GM23248 (cell line): ENCODE measurements at regions of chr4 and their contacts with region 1.

Region 1: DNA sequence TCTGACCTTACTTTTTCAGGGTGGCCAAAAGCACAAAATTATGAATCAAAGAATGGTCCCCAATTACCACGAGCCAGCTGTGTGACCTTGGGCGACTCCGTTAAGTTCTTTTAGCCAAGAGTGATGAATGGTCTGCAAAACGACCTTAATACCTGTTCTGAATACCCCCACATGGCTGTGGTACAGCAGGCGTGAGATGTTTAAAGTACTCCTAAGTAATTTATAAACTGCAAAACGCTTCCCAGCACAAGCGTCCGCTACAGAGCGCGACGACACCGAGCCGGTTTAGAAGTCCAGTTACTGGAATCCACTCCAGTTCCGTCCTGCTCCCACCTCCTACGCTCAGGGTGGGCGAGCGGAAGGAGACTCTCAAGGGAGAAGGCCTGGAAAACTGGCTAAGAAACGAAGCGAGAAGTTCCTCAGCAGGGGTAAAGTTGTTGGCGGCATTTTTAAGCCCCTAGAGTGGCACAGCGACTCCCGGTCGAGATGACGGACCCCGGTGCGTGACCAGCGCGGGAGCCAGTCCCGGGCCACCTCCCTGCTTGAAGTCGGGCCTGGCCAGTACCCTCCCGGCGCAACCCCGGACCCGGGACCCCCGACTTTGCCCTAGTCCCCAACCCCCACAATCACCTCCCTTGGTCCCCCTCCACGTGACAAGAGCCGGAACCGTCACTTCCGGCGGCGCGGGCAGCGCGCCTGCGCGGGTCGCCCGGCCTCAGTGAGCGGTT is 683 bp upstream of the BMP2K start:
- DNase-seq: peak; percentile 88
- H3K4me3 ChIP-seq: peak overlapping the region; percentile 84
- H3K27ac ChIP-seq: peak overlapping the region; percentile 91
- H3K4me1 ChIP-seq: peaks cover 34% of the 10 kb centered on the region
- H3K27me3 ChIP-seq: no peaks in the 10 kb centered on the region

Region 2: DNA sequence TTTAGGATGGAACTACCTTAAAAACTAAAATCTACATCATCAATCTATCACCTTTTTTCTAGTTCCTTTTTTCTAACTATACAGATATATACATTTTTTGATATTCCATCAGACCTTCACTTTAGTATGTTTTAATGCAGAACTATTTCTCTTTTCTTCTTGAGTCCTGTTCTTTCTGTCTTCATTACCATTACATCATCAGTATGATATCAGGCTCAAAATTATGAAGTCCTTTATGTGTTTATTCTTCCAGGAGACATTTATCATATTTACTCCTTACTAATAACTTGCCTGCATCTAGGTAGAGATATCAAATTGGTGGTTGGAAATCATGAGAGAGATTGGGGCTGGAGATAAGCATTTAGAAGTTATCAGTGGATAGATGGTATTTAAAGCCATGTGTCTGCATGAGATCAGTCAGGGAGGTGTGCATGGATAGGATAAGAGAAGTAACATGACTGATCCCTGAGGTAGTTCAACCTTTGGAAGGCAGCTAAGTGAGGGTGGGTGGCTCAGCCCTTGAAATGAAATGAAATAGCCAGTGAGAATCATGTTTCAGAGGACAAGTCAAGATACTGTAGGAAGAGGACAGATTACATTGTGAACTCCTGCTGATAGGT is 869.7 kb before region 1 on chr4:
- in situ Hi-C with region 1: no loop called
- DNase-seq: no peak
- H3K4me3 ChIP-seq: no peak overlapping the region
- H3K27ac ChIP-seq: no peak overlapping the region
- H3K4me1 ChIP-seq: peaks cover 1% of the 10 kb centered on the region; the same call in 1 of the 2 replicates
- H3K27me3 ChIP-seq: no peaks in the 10 kb centered on the region

Region 3: GRCh38 chr4:78638337-78639172 is 136.9 kb before region 1 on chr4:
- in situ Hi-C with region 1: no loop called
- DNase-seq: no peak
- H3K4me3 ChIP-seq: no peak overlapping the region
- H3K27ac ChIP-seq: no peak overlapping the region
- H3K4me1 ChIP-seq: peaks cover 10% of the 10 kb centered on the region
- H3K27me3 ChIP-seq: no peaks in the 10 kb centered on the region

Region 4: GRCh38 chr4:78656968-78657445 is 118.5 kb before region 1 on chr4:
- in situ Hi-C with region 1: loop called (anchors 10 kb)
- DNase-seq: no peak
- H3K4me3 ChIP-seq: no peak overlapping the region
- H3K27ac ChIP-seq: peak overlapping the region; percentile 44; the same call in 1 of the 2 replicates
- H3K4me1 ChIP-seq: peaks cover 80% of the 10 kb centered on the region
- H3K27me3 ChIP-seq: no peaks in the 10 kb centered on the region